CD8-positive, alpha-beta memory T cell (primary cell): ENCODE measurements at regions of chr1 and their contacts with region 1.

Region 1: DNA sequence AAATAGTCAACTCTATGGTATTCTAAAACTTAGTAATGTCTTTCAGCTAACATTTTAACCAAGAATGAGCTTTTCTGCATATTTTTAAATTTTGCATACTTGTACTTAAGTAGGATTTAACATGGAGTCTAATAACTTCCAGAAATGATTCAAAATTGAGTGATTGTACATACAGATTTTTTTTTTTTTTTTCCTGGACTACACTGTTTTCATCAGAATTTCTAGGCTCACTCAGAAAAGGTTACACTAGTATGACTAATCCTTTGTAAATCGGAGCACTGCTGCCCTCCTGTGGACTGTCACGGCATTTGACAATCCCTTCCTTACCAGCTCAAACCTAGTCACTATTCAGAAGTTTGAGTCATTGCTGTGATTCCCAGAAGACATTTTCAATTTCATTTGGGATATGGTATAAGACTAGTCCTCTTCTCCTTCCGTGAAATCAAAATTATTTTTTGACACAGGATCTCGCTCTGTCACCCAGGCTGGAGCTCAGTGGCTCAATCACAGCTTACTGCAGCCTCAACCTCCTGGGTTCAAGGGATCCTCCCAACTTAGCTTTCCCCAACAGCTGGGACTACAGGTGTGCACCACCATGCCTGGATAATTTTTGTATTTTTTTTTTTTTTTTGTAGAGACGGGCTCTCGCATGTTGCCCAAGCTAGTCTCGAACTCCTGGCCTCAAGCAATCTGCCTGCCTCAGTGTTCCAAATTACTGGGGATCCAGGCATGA is 45.5 kb downstream of the CD46 start:
- DNase-seq: peak; percentile 39 to 82 (median 55)
- H3K4me3 ChIP-seq: no peak overlapping the region
- H3K4me3 Mint-ChIP-seq: no peak overlapping the region
- H3K27ac ChIP-seq: no peak overlapping the region
- H3K27ac Mint-ChIP-seq: peak overlapping the region in 2 of 8 donors; percentile 6 to 40
- H3K4me1 ChIP-seq: peaks cover 23% of the 10 kb centered on the region
- H3K4me1 Mint-ChIP-seq: peaks cover 41 to 51% (median 48%) of the 10 kb centered on the region in 3 donors
- H3K27me3 ChIP-seq: no peaks in the 10 kb centered on the region
- H3K27me3 Mint-ChIP-seq: no peaks in the 10 kb centered on the region

Region 2: GRCh38 chr1:207711285-207711684 is 86.1 kb before region 1 on chr1:
- CTCF ChIA-PET with region 1: interaction called, 15 read pairs
- POLR2A ChIA-PET with region 1: no interaction called
- DNase-seq: no peak
- H3K4me3 ChIP-seq: no peak overlapping the region
- H3K4me3 Mint-ChIP-seq: no peak overlapping the region
- H3K27ac ChIP-seq: no peak overlapping the region
- H3K27ac Mint-ChIP-seq: no peak overlapping the region
- H3K4me1 ChIP-seq: no peaks in the 10 kb centered on the region
- H3K4me1 Mint-ChIP-seq: peaks cover 0 to 5% (median 0%) of the 10 kb centered on the region in 3 donors
- H3K27me3 ChIP-seq: no peaks in the 10 kb centered on the region
- H3K27me3 Mint-ChIP-seq: peaks cover 1 to 3% of the 10 kb centered on the region in 2 donors

Region 3: DNA sequence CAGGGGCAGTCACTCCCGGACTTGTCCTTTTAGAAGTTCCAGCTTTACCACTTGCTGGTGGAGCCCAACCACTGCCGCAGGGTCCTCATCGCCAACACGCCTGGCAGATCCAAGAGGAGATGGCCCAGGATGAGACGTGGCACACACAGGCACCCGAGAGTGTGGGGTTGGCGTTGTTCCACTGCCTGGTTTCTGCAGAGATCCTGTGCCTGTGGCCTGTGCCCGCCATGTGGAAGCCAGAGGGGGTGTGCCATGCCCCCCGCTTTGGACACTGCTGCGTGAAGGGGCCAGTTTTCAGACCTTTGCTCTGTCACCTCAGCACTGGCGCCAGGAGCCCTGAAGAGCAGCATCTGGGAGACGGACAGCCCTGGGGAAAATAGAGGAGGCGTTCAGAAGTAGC is 34.8 kb before region 1 on chr1:
- CTCF ChIA-PET with region 1: no interaction called
- POLR2A ChIA-PET with region 1: no interaction called
- DNase-seq: no peak
- H3K4me3 ChIP-seq: no peak overlapping the region
- H3K4me3 Mint-ChIP-seq: no peak overlapping the region
- H3K27ac ChIP-seq: no peak overlapping the region
- H3K27ac Mint-ChIP-seq: peak overlapping the region in 1 of 8 donors; percentile 33
- H3K4me1 ChIP-seq: no peaks in the 10 kb centered on the region
- H3K4me1 Mint-ChIP-seq: peaks cover 2 to 11% (median 11%) of the 10 kb centered on the region in 3 donors
- H3K27me3 ChIP-seq: no peaks in the 10 kb centered on the region
- H3K27me3 Mint-ChIP-seq: no peaks in the 10 kb centered on the region

Region 4: DNA sequence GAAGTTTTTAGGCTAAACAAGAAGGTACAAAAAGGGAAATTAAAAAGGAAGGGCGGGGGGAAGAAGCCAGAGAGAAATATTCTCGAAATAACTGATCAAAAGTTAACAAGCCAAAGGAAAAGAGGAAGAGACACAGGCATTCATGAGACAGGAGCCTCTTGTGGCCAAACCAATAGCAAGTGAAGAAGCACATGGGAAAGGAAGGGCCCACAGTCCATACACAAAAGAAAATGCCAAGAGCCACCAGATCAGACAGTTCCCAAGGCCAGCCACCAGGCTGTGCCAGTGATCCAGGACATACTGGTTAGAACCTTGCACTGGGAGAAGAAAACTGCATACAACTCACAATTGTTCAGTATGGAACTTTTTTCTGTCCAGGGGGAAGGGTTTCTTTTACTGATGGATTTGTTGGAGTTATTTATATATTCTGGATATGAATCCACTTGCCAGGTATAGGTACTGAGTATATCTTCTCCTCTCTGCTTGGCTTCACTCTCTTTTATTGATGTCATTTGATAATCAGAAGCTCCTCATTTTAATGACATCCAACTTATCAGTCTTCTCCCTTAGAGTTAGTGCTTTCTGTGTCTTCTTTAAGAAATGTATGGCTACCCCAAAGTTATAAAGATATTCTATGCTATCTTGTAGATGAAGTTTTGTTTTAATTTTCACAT is 31.2 kb after region 1 on chr1:
- CTCF ChIA-PET with region 1: interaction called, 12 read pairs
- POLR2A ChIA-PET with region 1: interaction called, 3 read pairs
- DNase-seq: peak; percentile 32 to 73 (median 47)
- H3K4me3 ChIP-seq: no peak overlapping the region
- H3K4me3 Mint-ChIP-seq: no peak overlapping the region
- H3K27ac ChIP-seq: peak overlapping the region; percentile 48
- H3K27ac Mint-ChIP-seq: peak overlapping the region; percentile 65 to 98 (median 86)
- H3K4me1 ChIP-seq: peaks cover 88% of the 10 kb centered on the region
- H3K4me1 Mint-ChIP-seq: peaks cover 84 to 100% (median 98%) of the 10 kb centered on the region in 3 donors
- H3K27me3 ChIP-seq: no peaks in the 10 kb centered on the region
- H3K27me3 Mint-ChIP-seq: peaks cover 4% of the 10 kb centered on the region in 2 donors

Region 5: DNA sequence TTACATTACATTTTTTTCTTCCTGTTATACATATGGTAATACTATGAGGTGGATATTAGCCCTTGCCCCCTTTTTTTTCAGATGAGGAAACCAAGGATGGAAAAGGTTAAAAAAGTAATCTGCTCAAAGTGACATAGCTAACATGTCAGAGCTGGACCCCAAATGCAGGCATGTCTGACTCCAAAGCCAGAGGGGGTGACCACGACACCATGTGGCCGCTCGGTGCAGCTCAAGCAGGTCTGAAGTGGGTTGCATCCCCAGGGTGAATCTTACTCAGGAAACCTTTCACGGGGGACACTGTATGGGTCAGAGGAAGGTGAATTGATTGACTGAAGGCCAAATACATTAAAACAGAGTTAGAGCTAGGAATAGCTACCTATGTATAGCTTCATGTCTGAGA is 78.7 kb after region 1 on chr1:
- CTCF ChIA-PET with region 1: interaction called, 15 read pairs
- POLR2A ChIA-PET with region 1: interaction called, 3 read pairs
- DNase-seq: no peak
- H3K4me3 ChIP-seq: no peak overlapping the region
- H3K4me3 Mint-ChIP-seq: no peak overlapping the region
- H3K27ac ChIP-seq: no peak overlapping the region
- H3K27ac Mint-ChIP-seq: peak overlapping the region in 2 of 8 donors; percentile 22 to 46
- H3K4me1 ChIP-seq: peaks cover 33% of the 10 kb centered on the region
- H3K4me1 Mint-ChIP-seq: peaks cover 32 to 53% (median 35%) of the 10 kb centered on the region in 3 donors
- H3K27me3 ChIP-seq: no peaks in the 10 kb centered on the region
- H3K27me3 Mint-ChIP-seq: peaks cover 0 to 1% of the 10 kb centered on the region in 2 donors